ENCODE measurements at regions of chr16 and their contacts with region 1.

Region 1: DNA sequence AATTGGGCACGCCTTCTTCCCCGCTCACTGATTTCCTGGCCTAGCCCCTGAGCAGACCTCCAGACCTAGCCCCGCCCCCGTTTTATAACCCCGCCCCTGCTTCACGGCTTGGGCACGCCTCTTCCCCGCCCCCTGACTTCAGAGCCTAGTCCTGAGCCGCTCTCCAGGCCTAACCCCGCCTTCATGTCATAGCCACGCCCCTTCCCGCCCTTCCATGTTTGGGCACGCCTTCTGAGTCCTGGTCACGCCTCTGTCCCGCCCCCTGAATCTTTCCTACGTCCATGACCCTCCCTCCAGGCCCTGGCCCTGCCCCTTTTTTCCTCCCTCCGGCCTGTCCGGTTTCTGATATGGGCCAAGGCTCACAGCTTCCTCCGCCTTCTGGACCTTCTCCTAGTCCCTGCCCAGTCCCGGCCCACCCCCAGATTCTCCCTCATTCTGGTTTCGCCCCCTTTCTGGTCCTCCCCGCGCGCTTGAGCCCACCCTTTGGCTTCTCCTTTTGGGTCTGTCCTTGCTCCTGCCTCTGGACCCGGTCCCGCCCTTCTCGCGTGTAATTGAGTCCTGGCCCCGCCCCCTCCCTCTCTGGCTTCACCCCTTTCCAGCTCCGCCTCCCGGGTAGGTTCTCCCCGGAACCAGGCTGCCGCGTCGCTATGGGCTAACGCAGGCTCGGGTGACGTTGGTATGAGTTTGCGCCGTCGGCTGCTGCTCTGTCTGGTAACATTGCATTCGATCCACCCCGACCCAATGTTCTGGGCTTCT is 15.1 kb upstream of the EEF2K start:
- DNase-seq: peak; percentile 98 to 100 (median 100)
- ATAC-seq: peak; percentile 54
- H3K4me3 ChIP-seq: peak overlapping the region; percentile 65
- H3K4me3 Mint-ChIP-seq: peak overlapping the region; percentile 83
- H3K27ac ChIP-seq: peak overlapping the region; percentile 99 to 100
- H3K27ac Mint-ChIP-seq: peak overlapping the region; percentile 96
- H3K4me1 ChIP-seq: peaks cover 83% of the 10 kb centered on the region
- H3K4me1 Mint-ChIP-seq: peaks cover 63% of the 10 kb centered on the region
- H3K27me3 ChIP-seq: no peaks in the 10 kb centered on the region
- H3K27me3 Mint-ChIP-seq: peaks cover 7% of the 10 kb centered on the region
- CTCF ChIP-seq: no peak

Region 2: GRCh38 chr16:21599233-21600030 is 591.5 kb before region 1 on chr16 and contains the start of gene METTL9:
- CTCF ChIA-PET with region 1: no interaction called
- POLR2A ChIA-PET with region 1: interaction called, 10 read pairs
- intact Hi-C with region 1: loop called in 1 of 2 experiments (anchors 5 kb)
- DNase-seq: peak; percentile 91 to 98 (median 94)
- ATAC-seq: peak; percentile 90
- H3K4me3 ChIP-seq: peak within 1 kb of the TSS; percentile 85
- H3K4me3 Mint-ChIP-seq: peak within 1 kb of the TSS; percentile 98
- H3K27ac ChIP-seq: peak within 1 kb of the TSS; percentile 85 to 86
- H3K27ac Mint-ChIP-seq: peak within 1 kb of the TSS; percentile 89
- H3K4me1 ChIP-seq: peaks cover 32% of the 10 kb centered on the region
- H3K4me1 Mint-ChIP-seq: peaks cover 62% of the 10 kb centered on the region
- H3K27me3 ChIP-seq: no peaks in the 10 kb centered on the region
- H3K27me3 Mint-ChIP-seq: no peaks in the 10 kb centered on the region
- CTCF ChIP-seq: no peak
- total RNA-seq, gene METTL9: 78.4 to 86.7 TPM

Region 3: GRCh38 chr16:21708533-21709115 is 482.3 kb before region 1 on chr16:
- CTCF ChIA-PET with region 1: no interaction called
- POLR2A ChIA-PET with region 1: no interaction called
- intact Hi-C with region 1: no loop called
- DNase-seq: peak; percentile 71 to 93 (median 85)
- ATAC-seq: peak; percentile 84
- H3K4me3 ChIP-seq: no peak overlapping the region
- H3K4me3 Mint-ChIP-seq: no peak overlapping the region
- H3K27ac ChIP-seq: no peak overlapping the region
- H3K27ac Mint-ChIP-seq: no peak overlapping the region
- H3K4me1 ChIP-seq: peaks cover 3% of the 10 kb centered on the region
- H3K4me1 Mint-ChIP-seq: peaks cover 5% of the 10 kb centered on the region
- H3K27me3 ChIP-seq: no peaks in the 10 kb centered on the region
- H3K27me3 Mint-ChIP-seq: no peaks in the 10 kb centered on the region
- CTCF ChIP-seq: peak; percentile 88

Region 4: DNA sequence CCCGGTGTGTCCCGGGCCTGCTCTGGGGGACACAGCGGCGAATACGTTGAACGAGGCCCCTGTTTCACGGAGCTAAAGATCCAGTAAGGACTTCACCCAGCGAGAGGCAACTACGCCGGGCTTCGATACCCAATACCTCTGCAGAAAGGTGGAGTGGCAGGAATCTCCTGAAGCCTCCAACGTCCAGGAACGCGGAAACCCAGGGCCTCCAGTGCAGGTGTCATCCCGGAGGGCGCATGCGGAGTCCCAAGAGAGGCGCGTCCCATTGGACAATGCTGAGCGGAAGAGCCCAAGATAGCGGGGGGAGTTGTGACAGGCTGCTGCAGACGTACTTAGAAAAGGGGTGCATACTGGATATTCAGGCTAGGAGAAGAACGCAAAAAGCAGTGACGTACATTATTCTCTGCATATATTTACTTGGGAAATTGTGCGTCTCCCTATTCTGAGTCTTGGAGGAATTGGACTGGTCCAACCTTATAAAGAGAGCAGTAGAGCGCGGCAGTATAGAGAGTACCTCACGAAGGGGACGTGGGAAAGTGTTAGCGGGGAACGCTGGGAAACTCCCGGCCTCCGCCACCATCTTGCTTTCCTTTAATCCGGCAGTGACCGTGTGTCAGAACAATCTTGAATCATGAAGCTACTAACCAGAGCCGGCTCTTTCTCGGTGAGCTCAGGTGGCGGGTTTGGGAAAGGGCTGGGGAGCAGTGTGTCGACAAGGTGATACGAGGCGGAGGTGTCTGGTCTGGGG is 238.0 kb before region 1 on chr16 and contains the start of gene UQCRC2:
- CTCF ChIA-PET with region 1: interaction called, 7 read pairs
- POLR2A ChIA-PET with region 1: interaction called, 41 read pairs
- intact Hi-C with region 1: loop called (anchors 1 kb)
- DNase-seq: peak; percentile 76 to 95 (median 82)
- ATAC-seq: peak; percentile 87
- H3K4me3 ChIP-seq: peak within 1 kb of the TSS; percentile 92
- H3K4me3 Mint-ChIP-seq: peak within 1 kb of the TSS; percentile 94
- H3K27ac ChIP-seq: peak within 1 kb of the TSS; percentile 93 to 96
- H3K27ac Mint-ChIP-seq: peak within 1 kb of the TSS; percentile 94
- H3K4me1 ChIP-seq: peaks cover 52% of the 10 kb centered on the region
- H3K4me1 Mint-ChIP-seq: peaks cover 62% of the 10 kb centered on the region
- H3K27me3 ChIP-seq: no peaks in the 10 kb centered on the region
- H3K27me3 Mint-ChIP-seq: no peaks in the 10 kb centered on the region
- CTCF ChIP-seq: no peak
- total RNA-seq, gene UQCRC2: 142 to 146 TPM

Region 5: GRCh38 chr16:22007509-22008214 is 183.3 kb before region 1 on chr16 and contains the start of gene MOSMO:
- CTCF ChIA-PET with region 1: interaction called, 34 read pairs
- POLR2A ChIA-PET with region 1: interaction called, 98 read pairs
- intact Hi-C with region 1: no loop called
- DNase-seq: peak; percentile 37 to 85 (median 66)
- ATAC-seq: peak; percentile 83
- H3K4me3 ChIP-seq: peak within 1 kb of the TSS; percentile 89
- H3K4me3 Mint-ChIP-seq: peak within 1 kb of the TSS; percentile 90
- H3K27ac ChIP-seq: peak within 1 kb of the TSS; percentile 37 to 47
- H3K27ac Mint-ChIP-seq: peak within 1 kb of the TSS; percentile 79
- H3K4me1 ChIP-seq: peaks cover 28% of the 10 kb centered on the region
- H3K4me1 Mint-ChIP-seq: peaks cover 51% of the 10 kb centered on the region
- H3K27me3 ChIP-seq: no peaks in the 10 kb centered on the region
- H3K27me3 Mint-ChIP-seq: no peaks in the 10 kb centered on the region
- CTCF ChIP-seq: no peak
- total RNA-seq, gene MOSMO: 2.3 to 2.8 TPM

Region 6: GRCh38 chr16:22206013-22206841 is 15.3 kb after region 1 on chr16 and contains the start of gene EEF2K:
- CTCF ChIA-PET with region 1: interaction called, 20 read pairs
- POLR2A ChIA-PET with region 1: interaction called, 107 read pairs
- intact Hi-C with region 1: loop called in 1 of 2 experiments (anchors 1 kb)
- DNase-seq: peak; percentile 60 to 92 (median 76)
- ATAC-seq: peak; percentile 91
- H3K4me3 ChIP-seq: peak within 1 kb of the TSS; percentile 85
- H3K4me3 Mint-ChIP-seq: peak within 1 kb of the TSS; percentile 96
- H3K27ac ChIP-seq: peak within 1 kb of the TSS in 1 of 2 donors; percentile 51
- H3K27ac Mint-ChIP-seq: peak within 1 kb of the TSS; percentile 79
- H3K4me1 ChIP-seq: peaks cover 26% of the 10 kb centered on the region
- H3K4me1 Mint-ChIP-seq: peaks cover 36% of the 10 kb centered on the region
- H3K27me3 ChIP-seq: no peaks in the 10 kb centered on the region
- H3K27me3 Mint-ChIP-seq: no peaks in the 10 kb centered on the region
- CTCF ChIP-seq: peak; percentile 81
- total RNA-seq, gene EEF2K: 10.1 to 13.2 TPM

Region 7: DNA sequence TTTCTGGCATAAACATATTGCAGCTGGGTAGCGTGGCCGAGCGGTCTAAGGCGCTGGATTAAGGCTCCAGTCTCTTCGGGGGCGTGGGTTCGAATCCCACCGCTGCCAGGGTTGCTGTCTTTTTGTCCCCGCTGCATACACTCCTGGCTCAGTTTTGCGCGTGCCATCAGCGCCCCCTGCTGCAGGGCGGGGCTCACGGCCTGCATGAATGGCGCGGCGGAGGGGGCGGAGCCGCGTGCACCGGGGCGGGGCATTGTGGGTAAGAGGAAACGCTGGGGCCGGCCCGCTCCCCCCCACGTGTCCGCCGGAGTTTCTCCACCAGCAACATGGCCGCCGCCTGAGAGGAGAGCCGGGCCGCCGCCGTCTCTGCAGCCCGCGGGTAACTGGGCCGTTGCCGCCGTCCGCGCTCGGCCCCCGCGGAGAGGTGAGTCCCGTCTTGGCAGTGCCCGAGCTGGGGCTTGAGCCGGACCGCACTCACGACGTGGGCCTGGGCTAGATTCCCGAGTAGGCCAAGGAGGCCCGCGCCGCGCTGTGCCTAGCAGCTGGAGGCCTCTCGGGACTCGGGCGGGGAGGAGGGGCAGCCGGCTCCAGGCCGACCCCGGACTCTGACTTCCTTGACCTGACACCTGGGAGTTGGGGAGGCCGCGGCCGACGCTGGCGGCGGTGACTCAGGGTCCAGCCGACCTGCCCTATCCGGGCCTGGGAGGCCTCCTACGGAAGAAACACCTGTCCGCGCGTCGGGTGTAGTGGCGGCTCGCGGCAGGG is 106.3 kb after region 1 on chr16 and contains the start of gene POLR3E:
- CTCF ChIA-PET with region 1: interaction called, 33 read pairs
- POLR2A ChIA-PET with region 1: interaction called, 157 read pairs
- intact Hi-C with region 1: loop called (anchors 1 kb)
- DNase-seq: peak; percentile 99 to 100 (median 100)
- ATAC-seq: peak; percentile 77
- H3K4me3 ChIP-seq: peak within 1 kb of the TSS; percentile 66
- H3K4me3 Mint-ChIP-seq: peak within 1 kb of the TSS; percentile 96
- H3K27ac ChIP-seq: peak within 1 kb of the TSS; percentile 97 to 99
- H3K27ac Mint-ChIP-seq: peak within 1 kb of the TSS; percentile 99
- H3K4me1 ChIP-seq: peaks cover 45% of the 10 kb centered on the region
- H3K4me1 Mint-ChIP-seq: peaks cover 54% of the 10 kb centered on the region
- H3K27me3 ChIP-seq: no peaks in the 10 kb centered on the region
- H3K27me3 Mint-ChIP-seq: peaks cover 15% of the 10 kb centered on the region
- CTCF ChIP-seq: peak; percentile 91
- total RNA-seq, gene POLR3E: 239 to 242 TPM

Region 8: GRCh38 chr16:22374311-22375116 is 183.6 kb after region 1 on chr16 and contains the start of gene CDR2:
- CTCF ChIA-PET with region 1: no interaction called
- POLR2A ChIA-PET with region 1: interaction called, 22 read pairs
- intact Hi-C with region 1: loop called in 1 of 2 experiments (anchors 5 kb)
- DNase-seq: peak; percentile 96 to 99 (median 97)
- ATAC-seq: peak; percentile 91
- H3K4me3 ChIP-seq: peak within 1 kb of the TSS; percentile 91
- H3K4me3 Mint-ChIP-seq: peak within 1 kb of the TSS; percentile 99
- H3K27ac ChIP-seq: peak within 1 kb of the TSS; percentile 31 to 83
- H3K27ac Mint-ChIP-seq: peak within 1 kb of the TSS; percentile 97
- H3K4me1 ChIP-seq: peaks cover 26% of the 10 kb centered on the region
- H3K4me1 Mint-ChIP-seq: peaks cover 56% of the 10 kb centered on the region
- H3K27me3 ChIP-seq: no peaks in the 10 kb centered on the region
- H3K27me3 Mint-ChIP-seq: no peaks in the 10 kb centered on the region
- CTCF ChIP-seq: no peak
- total RNA-seq, gene CDR2: 104 to 113 TPM